Panc1 (cell line): ENCODE measurements at regions of chr1 and their contacts with region 1.

Region 1: GRCh38 chr1:206106328-206107167 is 10.6 kb downstream of the AVPR1B start:
- DNase-seq: peak; percentile 52
- ATAC-seq: peak; percentile 93
- H3K4me3 ChIP-seq: no peak overlapping the region
- H3K27ac ChIP-seq: no peak overlapping the region
- H3K4me1 ChIP-seq: no peaks in the 10 kb centered on the region
- H3K27me3 ChIP-seq: no peaks in the 10 kb centered on the region; the same call in 1 of the 2 replicates
- CTCF ChIP-seq: peak; percentile 91

Region 2: GRCh38 chr1:205791568-205792180 is 314.9 kb before region 1 on chr1:
- CTCF ChIA-PET with region 1: no interaction called
- POLR2A ChIA-PET with region 1: no interaction called
- in situ Hi-C with region 1: no loop called
- intact Hi-C with region 1: loop called (anchors 5 kb)
- DNase-seq: peak; percentile 46
- ATAC-seq: peak; percentile 97
- H3K4me3 ChIP-seq: no peak overlapping the region
- H3K27ac ChIP-seq: no peak overlapping the region
- H3K4me1 ChIP-seq: no peaks in the 10 kb centered on the region; the same call in 1 of the 2 replicates
- H3K27me3 ChIP-seq: no peaks in the 10 kb centered on the region
- CTCF ChIP-seq: peak; percentile 90

Region 3: DNA sequence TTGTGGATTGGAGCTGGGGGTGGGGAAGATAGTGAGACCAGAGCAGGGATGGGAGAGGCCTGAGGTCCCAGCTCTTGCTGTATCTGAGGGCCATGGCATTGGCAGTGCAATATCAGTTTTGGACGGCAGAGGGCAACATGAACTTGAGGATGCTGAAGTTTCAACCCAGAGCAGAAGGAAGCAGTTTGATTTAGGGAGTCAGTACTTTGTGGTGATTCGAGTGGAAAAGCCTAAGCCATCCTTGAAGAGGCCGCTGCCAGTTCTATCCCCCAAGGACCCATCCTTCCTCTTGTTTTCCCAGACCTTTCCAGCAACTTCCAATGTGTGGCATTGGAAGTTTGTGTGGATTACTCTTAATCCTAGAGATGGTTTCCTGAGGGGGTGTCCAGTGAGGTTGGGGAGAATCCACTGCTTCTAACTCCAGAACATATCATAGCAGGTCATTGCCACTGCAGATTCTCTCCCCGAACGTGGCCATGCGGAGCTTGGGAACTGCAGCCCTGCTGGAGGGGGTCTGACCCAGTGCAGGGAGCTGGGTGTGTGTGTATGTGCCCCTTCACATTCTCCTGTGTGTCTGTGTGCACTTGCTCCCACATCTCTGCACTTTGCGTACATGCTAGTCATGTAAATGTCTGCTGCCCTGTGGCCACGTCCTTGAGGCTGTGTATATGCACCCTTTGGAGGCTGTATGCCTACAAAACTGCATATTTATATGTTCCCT is 187.4 kb before region 1 on chr1:
- CTCF ChIA-PET with region 1: no interaction called
- POLR2A ChIA-PET with region 1: no interaction called
- in situ Hi-C with region 1: no loop called
- intact Hi-C with region 1: loop called (anchors 5 kb)
- DNase-seq: peak; percentile 69
- ATAC-seq: peak; percentile 94
- H3K4me3 ChIP-seq: no peak overlapping the region
- H3K27ac ChIP-seq: no peak overlapping the region
- H3K4me1 ChIP-seq: peaks cover 5% of the 10 kb centered on the region; the same call in 1 of the 2 replicates
- H3K27me3 ChIP-seq: no peaks in the 10 kb centered on the region
- CTCF ChIP-seq: peak; percentile 88

Region 4: GRCh38 chr1:205983925-205984725 is 122.4 kb before region 1 on chr1:
- CTCF ChIA-PET with region 1: interaction called, 22 read pairs
- POLR2A ChIA-PET with region 1: no interaction called
- in situ Hi-C with region 1: no loop called
- intact Hi-C with region 1: loop called (anchors 1 kb)
- DNase-seq: peak; percentile 39
- ATAC-seq: peak; percentile 96
- H3K4me3 ChIP-seq: no peak overlapping the region
- H3K27ac ChIP-seq: no peak overlapping the region
- H3K4me1 ChIP-seq: no peaks in the 10 kb centered on the region
- H3K27me3 ChIP-seq: no peaks in the 10 kb centered on the region
- CTCF ChIP-seq: peak; percentile 94

Region 5: DNA sequence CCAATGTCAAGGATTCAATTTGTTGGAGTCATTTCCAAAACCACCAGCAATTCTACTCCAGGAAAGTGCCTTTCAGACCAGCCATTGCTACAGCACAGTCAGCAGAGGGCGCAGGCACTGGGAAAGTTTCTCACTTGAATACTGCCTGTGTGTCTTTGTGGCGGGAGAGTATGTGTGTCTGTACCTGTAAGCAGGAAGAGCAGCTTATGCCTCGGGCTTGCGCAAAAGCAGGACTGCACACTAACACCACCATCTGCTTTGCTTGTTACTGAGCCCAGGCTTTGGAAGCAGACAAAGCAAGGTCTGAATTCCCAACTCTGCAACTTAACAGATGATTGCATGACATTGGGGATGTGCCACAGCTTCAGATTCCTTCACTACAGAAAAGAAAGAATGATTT is 75.8 kb before region 1 on chr1:
- CTCF ChIA-PET with region 1: interaction called, 9 read pairs
- POLR2A ChIA-PET with region 1: no interaction called
- in situ Hi-C with region 1: no loop called
- intact Hi-C with region 1: loop called (anchors 1 kb)
- DNase-seq: peak; percentile 58
- ATAC-seq: peak; percentile 96
- H3K4me3 ChIP-seq: no peak overlapping the region
- H3K27ac ChIP-seq: no peak overlapping the region
- H3K4me1 ChIP-seq: no peaks in the 10 kb centered on the region
- H3K27me3 ChIP-seq: peaks cover 29% of the 10 kb centered on the region
- CTCF ChIP-seq: peak; percentile 91